ENCODE measurements at regions of chr19 and their contacts with region 1.

Region 1: DNA sequence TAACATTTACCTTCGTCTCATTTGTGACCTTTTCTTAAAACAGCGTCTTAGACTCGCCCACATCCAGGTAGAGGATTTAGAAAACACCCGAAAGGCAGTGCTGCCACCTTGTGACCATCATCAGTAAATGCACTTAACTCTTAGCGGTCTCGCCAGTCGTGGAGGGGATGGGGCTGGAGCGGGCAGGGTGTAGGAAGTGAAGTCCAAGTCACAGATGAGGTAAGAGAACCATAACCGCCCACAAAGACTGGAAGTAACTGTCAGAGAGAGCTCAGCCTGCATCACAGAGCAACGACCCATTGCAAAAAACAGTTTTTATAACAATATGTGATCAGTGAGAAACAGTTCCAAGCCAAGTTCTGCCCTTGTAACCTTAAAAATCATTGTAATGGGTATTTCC is 10.7 kb upstream of the CEACAM3 start:
- DNase-seq: peak; percentile 93 to 99
- ATAC-seq: peak; percentile 74 to 92
- H3K4me3 ChIP-seq: no peak overlapping the region
- H3K27ac ChIP-seq: no peak overlapping the region
- H3K4me1 ChIP-seq: peaks cover 5% of the 10 kb centered on the region; the same call in 1 of the 3 replicates
- CTCF ChIP-seq: peak; percentile 99
- EP300 ChIP-seq: no peak
- POLR2A ChIP-seq: no peak
- RAD21 ChIP-seq: peak; percentile 80 to 88

Region 2: DNA sequence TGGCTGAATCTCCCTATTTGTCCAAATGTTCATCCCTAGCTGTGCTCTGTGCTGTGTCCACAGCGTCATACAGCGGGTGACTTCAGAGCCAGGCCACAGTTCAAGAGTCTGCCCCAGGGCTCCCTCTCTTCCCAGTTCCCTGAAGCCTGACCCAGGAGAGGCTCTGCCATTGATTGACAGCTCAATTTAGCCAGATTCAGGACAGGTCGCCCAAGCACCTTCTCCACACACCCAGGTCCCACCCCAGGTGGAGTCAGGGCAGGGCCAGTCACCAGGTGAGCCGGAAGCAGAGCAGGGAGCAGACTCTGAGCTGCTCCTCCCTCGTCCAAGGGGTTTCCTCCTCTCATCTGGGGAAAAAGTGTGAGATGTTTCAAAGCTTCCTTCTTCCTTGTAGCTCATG is 103.3 kb before region 1 on chr19:
- CTCF ChIA-PET with region 1: no interaction called
- POLR2A ChIA-PET with region 1: no interaction called
- DNase-seq: no peak
- ATAC-seq: peak in 1 of 2 experiments; percentile 31; a peak in 2 of 6 replicates
- H3K4me3 ChIP-seq: no peak overlapping the region
- H3K27ac ChIP-seq: no peak overlapping the region
- H3K4me1 ChIP-seq: no peaks in the 10 kb centered on the region
- CTCF ChIP-seq: no peak
- EP300 ChIP-seq: no peak
- POLR2A ChIP-seq: no peak
- RAD21 ChIP-seq: no peak

Region 3: DNA sequence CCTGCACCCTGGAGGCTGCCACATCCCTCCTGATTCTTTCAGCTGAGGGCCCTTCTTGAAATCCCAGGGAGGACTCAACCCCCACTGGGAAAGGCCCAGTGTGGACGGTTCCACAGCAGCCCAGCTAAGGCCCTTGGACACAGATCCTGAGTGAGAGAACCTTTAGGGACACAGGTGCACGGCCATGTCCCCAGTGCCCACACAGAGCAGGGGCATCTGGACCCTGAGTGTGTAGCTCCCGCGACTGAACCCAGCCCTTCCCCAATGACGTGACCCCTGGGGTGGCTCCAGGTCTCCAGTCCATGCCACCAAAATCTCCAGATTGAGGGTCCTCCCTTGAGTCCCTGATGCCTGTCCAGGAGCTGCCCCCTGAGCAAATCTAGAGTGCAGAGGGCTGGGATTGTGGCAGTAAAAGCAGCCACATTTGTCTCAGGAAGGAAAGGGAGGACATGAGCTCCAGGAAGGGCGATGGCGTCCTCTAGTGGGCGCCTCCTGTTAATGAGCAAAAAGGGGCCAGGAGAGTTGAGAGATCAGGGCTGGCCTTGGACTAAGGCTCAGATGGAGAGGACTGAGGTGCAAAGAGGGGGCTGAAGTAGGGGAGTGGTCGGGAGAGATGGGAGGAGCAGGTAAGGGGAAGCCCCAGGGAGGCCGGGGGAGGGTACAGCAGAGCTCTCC is 84.1 kb before region 1 on chr19:
- CTCF ChIA-PET with region 1: interaction called, 33 read pairs
- POLR2A ChIA-PET with region 1: no interaction called
- DNase-seq: peak; percentile 58 to 71
- ATAC-seq: peak; percentile 5 to 9; a peak in 4 of 6 replicates
- H3K4me3 ChIP-seq: no peak overlapping the region
- H3K27ac ChIP-seq: peak overlapping the region; percentile 71 to 86
- H3K4me1 ChIP-seq: peaks cover 68% of the 10 kb centered on the region
- CTCF ChIP-seq: peak; percentile 59
- EP300 ChIP-seq: no peak
- POLR2A ChIP-seq: no peak
- RAD21 ChIP-seq: peak; percentile 43 to 73; a peak in 4 of 5 replicates

Region 4: DNA sequence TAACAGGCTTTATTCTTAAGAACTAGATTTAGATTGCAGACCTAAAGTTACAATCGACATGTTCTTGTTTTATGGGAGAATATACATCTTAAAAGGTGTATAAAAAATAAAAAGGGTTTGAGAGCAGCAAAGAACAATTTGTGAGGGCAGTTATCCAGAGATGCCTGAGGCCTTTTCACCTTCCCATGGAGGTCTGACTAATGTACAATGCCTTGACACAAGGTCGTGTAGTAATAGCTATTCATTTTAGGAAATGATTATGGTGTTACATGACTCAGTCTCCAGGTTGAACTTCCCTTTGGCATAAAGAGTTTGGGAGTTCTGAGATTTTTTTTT is 10.3 kb before region 1 on chr19:
- CTCF ChIA-PET with region 1: interaction called, 277 read pairs
- POLR2A ChIA-PET with region 1: interaction called, 3 read pairs
- DNase-seq: peak in 1 of 2 experiments; percentile 50
- ATAC-seq: no peak
- H3K4me3 ChIP-seq: no peak overlapping the region
- H3K27ac ChIP-seq: no peak overlapping the region
- H3K4me1 ChIP-seq: peaks cover 5% of the 10 kb centered on the region; the same call in 2 of the 3 replicates
- CTCF ChIP-seq: no peak
- EP300 ChIP-seq: no peak
- POLR2A ChIP-seq: no peak
- RAD21 ChIP-seq: no peak

Region 5: DNA sequence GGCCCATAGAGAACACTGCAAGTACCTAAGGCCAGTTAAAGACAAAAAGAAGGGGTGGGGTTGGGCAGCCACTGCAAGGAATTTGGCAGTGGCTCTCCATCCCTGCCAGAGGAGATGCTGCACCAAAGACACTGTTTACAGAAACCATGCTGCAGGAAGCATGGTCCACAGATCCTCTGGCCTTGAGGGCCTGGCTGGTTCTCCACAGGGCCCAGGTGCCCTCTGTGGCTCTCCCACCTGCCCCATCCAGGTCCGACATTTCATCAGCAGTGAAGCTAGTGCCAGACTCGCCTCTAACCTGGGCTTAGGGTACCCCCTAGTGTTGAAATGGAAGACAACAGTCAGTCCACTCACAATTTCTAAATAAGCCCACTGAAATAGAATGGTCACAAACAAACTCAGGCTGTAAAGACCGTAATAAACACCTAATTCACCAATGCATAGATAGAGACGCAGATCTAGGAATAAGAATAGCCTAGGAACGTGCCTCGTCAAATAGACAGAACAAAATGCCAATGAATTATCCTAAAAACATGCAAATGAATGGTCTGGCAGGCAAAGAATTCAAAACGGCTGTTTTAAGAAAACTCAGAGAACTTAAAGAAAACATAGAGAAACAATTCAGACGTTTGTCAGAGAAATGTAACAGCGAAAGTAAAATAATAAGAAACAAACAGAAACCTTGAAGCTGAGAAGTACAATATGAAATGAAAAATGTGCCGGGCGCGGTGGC is 35.5 kb after region 1 on chr19:
- CTCF ChIA-PET with region 1: interaction called, 428 read pairs
- POLR2A ChIA-PET with region 1: no interaction called
- DNase-seq: peak; percentile 82 to 94
- ATAC-seq: peak; percentile 92 to 96
- H3K4me3 ChIP-seq: no peak overlapping the region
- H3K27ac ChIP-seq: no peak overlapping the region
- H3K4me1 ChIP-seq: no peaks in the 10 kb centered on the region
- CTCF ChIP-seq: peak; percentile 91
- EP300 ChIP-seq: no peak
- POLR2A ChIP-seq: no peak
- RAD21 ChIP-seq: peak; percentile 86 to 96

Measured in A549 (cell line).